ENCODE measurements at regions of chr12 and their contacts with region 1.

Region 1: GRCh38 chr12:65106948-65107347 is 14.2 kb downstream of the WIF1 start:
- DNase-seq: peak in 1 of 2 donors; percentile 23
- H3K4me3 ChIP-seq: no peak overlapping the region
- H3K27ac ChIP-seq: no peak overlapping the region
- H3K4me1 ChIP-seq: no peaks in the 10 kb centered on the region
- H3K27me3 ChIP-seq: no peaks in the 10 kb centered on the region
- CTCF ChIP-seq: peak in 1 of 7 experiments; percentile 35
- EP300 ChIP-seq: no peak
- POLR2A ChIP-seq: no peak

Region 2: DNA sequence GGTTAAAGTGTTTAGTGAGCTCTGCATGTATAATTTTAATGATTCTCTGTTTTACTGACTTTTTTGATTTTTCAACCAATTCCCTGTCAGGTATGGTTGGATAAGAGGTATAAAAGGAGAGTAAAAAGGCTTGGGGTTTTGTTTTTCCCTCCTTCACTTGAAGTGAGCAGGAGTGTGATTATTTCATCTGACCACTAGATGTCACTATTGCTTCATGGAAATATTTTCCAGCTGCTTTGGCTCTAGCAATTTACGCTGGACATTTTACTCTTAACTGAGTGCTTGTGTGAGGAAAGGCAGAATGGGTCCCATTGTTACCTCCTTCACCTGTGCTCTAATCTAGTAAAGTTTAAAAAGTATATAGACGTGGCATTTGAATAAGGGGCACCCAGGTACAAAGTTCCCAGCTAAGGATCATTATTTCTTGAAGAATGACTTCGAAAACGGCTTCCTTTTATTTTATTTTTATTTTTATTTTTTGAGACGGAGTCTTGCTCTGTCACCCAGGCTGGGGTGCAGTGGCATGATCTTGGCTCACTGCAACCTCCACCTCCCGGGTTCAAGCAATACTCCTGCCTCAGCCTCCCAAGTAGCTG is 216.0 kb before region 1 on chr12:
- intact Hi-C with region 1: loop called (anchors 10 kb)
- DNase-seq: peak in 1 of 2 donors; percentile 87
- H3K4me3 ChIP-seq: no peak overlapping the region
- H3K27ac ChIP-seq: no peak overlapping the region
- H3K4me1 ChIP-seq: no peaks in the 10 kb centered on the region
- H3K27me3 ChIP-seq: no peaks in the 10 kb centered on the region
- CTCF ChIP-seq: peak in 5 of 7 experiments; percentile 58 to 80 (median 71)
- EP300 ChIP-seq: no peak
- POLR2A ChIP-seq: no peak

Region 3: GRCh38 chr12:65067383-65067782 is 39.6 kb before region 1 on chr12:
- intact Hi-C with region 1: no loop called
- DNase-seq: no peak
- H3K4me3 ChIP-seq: no peak overlapping the region
- H3K27ac ChIP-seq: no peak overlapping the region
- H3K4me1 ChIP-seq: no peaks in the 10 kb centered on the region
- H3K27me3 ChIP-seq: no peaks in the 10 kb centered on the region
- CTCF ChIP-seq: no peak
- EP300 ChIP-seq: no peak
- POLR2A ChIP-seq: no peak

Region 4: GRCh38 chr12:65147312-65147905 is 40.5 kb after region 1 on chr12:
- intact Hi-C with region 1: no loop called
- DNase-seq: peak in 1 of 2 donors; percentile 41
- H3K4me3 ChIP-seq: no peak overlapping the region
- H3K27ac ChIP-seq: no peak overlapping the region
- H3K4me1 ChIP-seq: no peaks in the 10 kb centered on the region
- H3K27me3 ChIP-seq: peaks cover 0 to 6% (median 0%) of the 10 kb centered on the region in 3 donors
- CTCF ChIP-seq: no peak
- EP300 ChIP-seq: no peak
- POLR2A ChIP-seq: no peak

Measured in stomach (tissue), 19 donors.